ENCODE measurements at regions of chr13 and their contacts with region 1.

Region 1: DNA sequence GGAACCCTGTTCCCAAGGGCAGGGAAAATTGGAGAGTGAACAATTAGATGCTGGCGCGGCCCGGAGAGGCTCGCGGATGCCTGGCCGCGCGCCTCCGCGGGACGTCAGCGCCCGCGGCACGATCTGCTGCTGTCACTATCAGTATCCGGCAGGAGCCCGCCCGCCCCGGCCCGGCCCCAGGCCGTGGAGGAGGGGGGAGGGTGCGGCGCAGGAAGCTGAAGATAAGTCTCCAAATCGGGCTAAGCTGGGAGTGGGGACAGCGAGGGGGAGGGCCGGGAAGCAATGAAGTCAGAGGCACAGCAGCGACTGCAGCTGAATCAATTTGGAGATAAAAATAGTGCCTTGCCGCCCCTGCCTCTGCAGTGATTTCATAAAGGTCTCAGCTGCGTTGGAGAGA is 441.5 kb upstream of the KLF12 start:
- DNase-seq: peak; percentile 92
- ATAC-seq: peak; percentile 99

Region 2: DNA sequence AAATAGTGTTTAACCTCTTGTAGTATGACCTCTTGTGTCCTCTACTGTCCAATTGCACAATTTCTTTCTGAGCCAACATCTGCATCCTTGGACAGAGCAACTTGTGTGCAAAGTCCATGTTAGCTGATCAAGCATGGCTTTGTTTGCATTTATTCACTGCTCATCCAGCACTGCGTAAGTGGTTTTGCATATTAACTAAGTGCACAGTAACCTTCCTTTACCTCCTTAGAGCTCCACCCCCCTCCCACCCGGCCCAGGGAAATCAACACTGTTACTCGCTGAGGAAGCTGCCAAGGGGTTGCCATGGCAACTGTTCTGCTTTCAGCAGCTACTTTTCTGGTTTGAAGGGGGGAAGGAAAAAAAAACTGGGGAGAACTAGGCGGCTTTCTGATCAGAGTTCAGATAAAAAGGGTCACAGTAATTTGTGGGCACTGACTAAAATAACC is 288.0 kb before region 1 on chr13:
- intact Hi-C with region 1: loop called (anchors 5 kb)
- DNase-seq: peak; percentile 82
- ATAC-seq: peak; percentile 39

Region 3: DNA sequence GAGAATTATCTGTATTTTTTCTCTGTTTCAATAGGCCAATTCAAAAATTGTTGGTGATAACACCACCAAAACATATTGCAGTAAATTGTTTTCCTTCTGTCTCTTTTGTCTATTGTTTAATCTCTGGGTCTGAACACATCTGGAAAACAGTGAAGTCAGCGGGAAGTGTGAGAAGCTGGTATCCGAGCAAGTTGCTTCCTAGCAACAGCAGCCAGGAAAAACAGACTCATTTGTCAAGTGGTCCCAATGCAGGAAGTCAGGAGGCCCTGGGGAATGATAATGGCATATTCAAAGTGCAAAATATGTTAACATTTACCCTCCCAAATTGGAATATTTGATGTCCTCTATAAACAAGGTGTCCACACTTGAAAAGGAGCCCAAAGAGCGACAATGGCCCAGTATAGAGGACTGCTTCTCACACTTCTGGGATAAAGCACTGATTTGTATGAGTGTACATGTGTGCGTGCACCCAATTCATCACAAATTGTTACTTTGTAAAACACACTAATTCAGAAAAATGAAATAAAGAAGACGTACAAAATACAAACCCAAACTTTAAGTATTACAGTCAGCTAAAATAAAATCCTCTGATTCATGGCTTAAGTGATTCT is 391.2 kb after region 1 on chr13:
- intact Hi-C with region 1: loop called (anchors 5 kb)
- DNase-seq: no peak
- ATAC-seq: peak; percentile 52

Region 4: DNA sequence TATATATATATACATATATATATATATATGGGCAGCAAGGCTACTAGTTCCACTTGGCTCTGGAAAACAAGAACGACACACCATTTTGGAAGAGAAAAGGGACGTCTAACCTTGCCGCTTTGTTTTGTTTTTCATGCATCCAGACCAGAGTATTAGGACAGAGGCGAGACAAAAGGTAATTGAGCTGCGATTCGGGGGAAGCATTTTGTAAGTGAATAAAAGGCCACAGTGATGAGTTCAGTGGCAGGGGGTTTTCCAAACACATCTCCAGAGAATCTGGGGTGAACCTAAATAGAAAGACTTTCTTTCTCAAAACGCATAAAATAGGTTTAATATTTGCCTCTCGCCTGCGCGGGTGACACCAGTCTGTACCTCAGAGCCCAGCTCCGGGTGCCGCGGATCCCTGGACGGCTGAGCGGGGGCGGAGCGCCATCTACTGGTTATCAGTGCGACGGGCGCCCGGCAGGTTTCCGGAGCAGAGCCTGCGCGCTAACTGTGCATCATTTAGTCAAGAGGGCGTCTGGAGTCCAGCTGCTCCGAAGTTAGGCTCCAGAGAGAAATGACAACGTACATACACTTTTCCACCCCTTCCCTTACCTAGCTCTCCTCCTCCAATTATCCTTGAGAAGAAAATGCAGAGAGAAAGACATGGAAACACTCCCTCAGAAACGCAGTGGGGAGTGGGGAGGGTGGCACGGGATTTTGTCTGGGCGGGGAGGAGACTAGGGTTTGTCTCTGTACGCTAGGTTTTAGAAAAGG is 643.9 kb after region 1 on chr13:
- intact Hi-C with region 1: loop called (anchors 5 kb)
- DNase-seq: peak; percentile 88
- ATAC-seq: peak; percentile 92

Measured in Right ventricle myocardium inferior (tissue), 1 donor.